CD8-positive, alpha-beta memory T cell (primary cell): ENCODE measurements at regions of chr17 and their contacts with region 1.

Region 1: GRCh38 chr17:40922239-40922638 is 15.2 kb downstream of the KRT23 start:
- DNase-seq: no peak
- H3K4me3 ChIP-seq: no peak overlapping the region
- H3K4me3 Mint-ChIP-seq: no peak overlapping the region
- H3K27ac ChIP-seq: no peak overlapping the region
- H3K27ac Mint-ChIP-seq: peak overlapping the region in 2 of 8 donors; percentile 26 to 63
- H3K4me1 ChIP-seq: peaks cover 4% of the 10 kb centered on the region
- H3K4me1 Mint-ChIP-seq: peaks cover 5 to 9% (median 7%) of the 10 kb centered on the region in 3 donors
- H3K27me3 ChIP-seq: no peaks in the 10 kb centered on the region
- H3K27me3 Mint-ChIP-seq: peaks cover 11 to 33% of the 10 kb centered on the region in 2 donors

Region 2: DNA sequence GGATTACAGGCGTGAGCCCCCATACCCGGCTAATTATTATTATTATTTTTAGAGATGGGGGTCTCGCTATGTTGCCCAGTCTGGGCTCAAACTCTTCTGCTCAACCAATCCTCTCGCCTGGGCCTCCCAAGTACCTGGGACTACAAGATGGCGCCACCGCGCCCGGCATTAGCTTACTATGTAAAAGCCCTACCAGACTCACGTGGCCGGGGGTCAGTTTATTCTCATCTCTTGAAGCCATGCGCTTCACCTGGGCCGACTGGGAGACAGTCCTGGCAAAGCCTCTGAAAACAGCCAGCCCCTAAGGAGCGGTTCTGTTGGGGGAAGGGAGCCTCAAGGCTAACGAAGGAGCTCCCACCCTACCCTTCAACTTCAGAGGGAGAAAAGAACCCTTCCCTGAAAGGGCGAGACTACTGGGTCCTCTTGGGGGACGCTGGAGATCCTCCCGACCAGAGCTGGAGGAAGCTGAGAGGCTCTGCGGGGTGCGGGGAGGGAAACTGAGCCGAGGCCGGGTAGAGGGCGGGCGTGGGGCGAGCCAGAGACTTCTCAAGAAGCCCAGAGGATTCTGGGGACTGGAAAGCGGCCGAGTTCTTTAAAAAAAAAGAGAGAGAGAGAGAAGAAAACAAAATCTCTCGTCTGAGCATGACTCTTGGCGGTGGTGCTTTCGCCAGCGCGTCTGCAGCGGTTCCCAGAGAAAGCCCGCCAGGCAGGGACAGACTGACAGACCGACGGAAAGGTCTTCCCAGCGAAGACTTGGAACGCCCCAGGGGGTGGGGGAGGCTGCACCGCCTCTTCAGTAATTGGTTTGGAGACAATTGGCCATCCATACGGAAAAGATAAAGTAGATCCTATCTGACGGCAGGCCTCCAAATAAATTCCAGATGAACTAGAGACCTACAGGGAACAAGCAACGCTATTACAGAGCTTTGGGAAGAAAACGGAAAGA is 1731.2 kb after region 1 on chr17:
- CTCF ChIA-PET with region 1: no interaction called
- POLR2A ChIA-PET with region 1: interaction called, 19 read pairs
- DNase-seq: no peak
- H3K4me3 ChIP-seq: no peak overlapping the region
- H3K4me3 Mint-ChIP-seq: peak overlapping the region in 1 of 7 donors; percentile 54
- H3K27ac ChIP-seq: no peak overlapping the region
- H3K27ac Mint-ChIP-seq: no peak overlapping the region
- H3K4me1 ChIP-seq: peaks cover 1% of the 10 kb centered on the region
- H3K4me1 Mint-ChIP-seq: peaks cover 5 to 7% (median 7%) of the 10 kb centered on the region in 3 donors
- H3K27me3 ChIP-seq: no peaks in the 10 kb centered on the region
- H3K27me3 Mint-ChIP-seq: peaks cover 21 to 22% of the 10 kb centered on the region in 2 donors